Vagina (tissue), 2 donors: ENCODE measurements at regions of chr15 and their contacts with region 1.

Region 1: GRCh38 chr15:97783240-97783639 is 177.3 kb upstream of the ARRDC4 start:
- DNase-seq: no peak
- H3K4me3 ChIP-seq: no peak overlapping the region
- H3K27ac ChIP-seq: no peak overlapping the region
- H3K4me1 ChIP-seq: no peaks in the 10 kb centered on the region
- H3K27me3 ChIP-seq: no peaks in the 10 kb centered on the region
- CTCF ChIP-seq: no peak
- POLR2A ChIP-seq: no peak

Region 2: DNA sequence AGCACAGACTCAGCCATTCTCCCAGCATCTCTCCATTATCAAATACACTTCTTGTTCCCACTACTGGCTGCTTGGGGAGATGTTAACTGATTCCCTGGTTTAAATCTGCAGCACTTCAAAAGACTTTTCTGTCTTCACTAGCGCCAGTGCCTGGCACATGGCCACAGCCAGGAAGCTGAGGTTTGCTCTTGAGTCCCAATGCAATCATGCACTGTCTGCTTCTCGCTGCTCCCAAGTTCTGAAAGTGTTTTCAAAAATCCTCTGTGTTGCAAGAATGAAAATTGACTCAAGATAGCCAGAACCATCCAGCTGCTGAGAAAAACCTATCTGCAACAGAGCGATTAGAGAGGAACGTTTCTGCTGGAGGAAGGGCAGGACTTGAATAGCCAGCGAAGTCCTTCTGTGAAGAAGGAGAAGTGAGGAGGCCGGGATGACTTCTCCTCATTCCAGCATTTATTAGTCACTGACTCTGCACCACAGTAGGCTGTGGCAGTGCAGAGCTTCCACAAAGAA is 1811.1 kb before region 1 on chr15:
- intact Hi-C with region 1: loop called (anchors 10 kb)
- DNase-seq: no peak
- H3K4me3 ChIP-seq: peak overlapping the region in 1 of 2 donors; percentile 11
- H3K27ac ChIP-seq: peak overlapping the region; percentile 34
- H3K4me1 ChIP-seq: no peaks in the 10 kb centered on the region
- H3K27me3 ChIP-seq: no peaks in the 10 kb centered on the region
- CTCF ChIP-seq: no peak
- POLR2A ChIP-seq: no peak